ENCODE measurements at regions of chr15 and their contacts with region 1.

Region 1: DNA sequence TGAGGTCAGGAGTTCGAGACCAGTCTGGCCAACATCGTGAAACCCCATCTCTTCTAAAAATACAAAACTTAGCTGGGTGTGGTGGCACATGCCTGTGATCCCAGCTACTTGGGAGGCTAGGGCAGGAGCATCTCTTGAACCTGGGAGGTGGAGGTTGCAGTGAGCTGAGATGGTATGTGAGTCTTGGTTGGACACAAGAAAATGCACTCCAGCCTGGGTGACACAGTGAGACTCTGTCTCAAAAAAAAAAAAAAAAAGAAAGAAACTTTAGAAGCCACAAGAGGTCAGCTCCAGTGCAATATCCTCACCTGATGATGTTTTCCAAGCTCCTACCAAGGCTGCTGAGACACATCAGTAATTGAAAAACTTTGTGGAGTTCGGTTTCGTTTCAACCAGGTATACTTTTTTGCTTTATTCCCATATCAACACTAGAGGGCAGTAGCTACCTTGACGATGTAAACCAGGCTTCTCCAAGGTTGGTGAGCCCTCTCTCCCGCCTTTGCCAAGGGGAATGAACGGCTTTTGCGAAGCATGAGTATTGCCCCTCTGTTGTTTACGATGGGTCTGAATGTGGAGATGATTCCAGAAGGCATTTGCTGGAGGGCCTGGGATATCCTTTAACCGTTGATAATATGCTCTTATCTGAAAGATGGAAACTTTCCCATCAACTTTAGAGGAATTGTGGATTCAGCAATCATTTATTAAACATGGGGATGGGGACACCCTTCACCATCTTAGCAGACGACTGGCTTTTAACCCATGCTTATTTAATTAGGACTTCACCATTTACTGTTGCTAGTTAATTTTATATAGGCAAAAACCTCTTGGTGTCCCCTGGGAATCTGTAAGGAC is 202.8 kb downstream of the SV2B start:
- DNase-seq: no peak
- H3K4me3 ChIP-seq: no peak overlapping the region
- H3K27ac ChIP-seq: no peak overlapping the region
- H3K4me1 ChIP-seq: peaks cover 0 to 19% (median 6%) of the 10 kb centered on the region in 6 donors
- H3K27me3 ChIP-seq: peaks cover 0 to 60% (median 10%) of the 10 kb centered on the region in 7 donors
- CTCF ChIP-seq: peak; percentile 37 to 78 (median 67)
- POLR2A ChIP-seq: no peak

Region 2: DNA sequence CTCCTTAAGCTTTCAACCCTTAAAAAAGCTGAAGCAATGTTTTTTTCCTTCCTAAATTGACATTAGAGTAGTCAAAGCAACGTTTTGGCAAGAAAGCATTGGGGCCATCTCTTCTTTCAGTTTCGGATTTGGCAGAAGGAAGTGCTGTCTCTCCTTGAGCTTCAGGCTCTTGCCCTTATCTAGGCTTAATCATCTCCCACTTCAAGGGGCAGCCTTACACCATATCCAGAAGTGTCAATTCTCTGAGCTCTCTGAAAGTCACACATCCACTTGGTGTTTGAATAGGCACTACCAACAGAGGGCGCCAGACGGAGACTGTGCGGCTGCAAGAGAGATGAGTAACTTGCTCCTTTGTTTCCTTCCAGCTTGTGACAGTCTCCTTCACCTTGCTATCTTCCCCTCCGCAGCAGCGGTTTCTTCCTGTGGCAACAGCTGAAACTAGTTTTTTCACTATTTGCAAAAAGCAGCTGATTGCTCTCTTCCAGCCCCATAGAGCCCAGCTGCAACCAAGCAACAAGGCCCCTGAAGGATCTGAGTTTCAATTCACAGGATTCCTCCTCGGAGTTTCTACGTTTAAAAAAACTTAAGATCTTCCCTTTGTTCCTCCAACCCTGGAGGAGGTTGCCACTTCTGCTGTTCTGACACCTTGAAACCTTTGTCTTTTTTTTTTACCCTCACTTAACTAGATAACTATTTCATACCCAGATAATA is 403.7 kb after region 1 on chr15:
- intact Hi-C with region 1: loop called (anchors 10 kb)
- DNase-seq: peak; percentile 85
- H3K4me3 ChIP-seq: no peak overlapping the region
- H3K27ac ChIP-seq: peak overlapping the region in 6 of 8 donors; percentile 8 to 47 (median 37)
- H3K4me1 ChIP-seq: peaks cover 3 to 19% (median 14%) of the 10 kb centered on the region in 6 donors
- H3K27me3 ChIP-seq: no peaks in the 10 kb centered on the region
- CTCF ChIP-seq: peak; percentile 30 to 85 (median 69)
- POLR2A ChIP-seq: no peak

Region 3: DNA sequence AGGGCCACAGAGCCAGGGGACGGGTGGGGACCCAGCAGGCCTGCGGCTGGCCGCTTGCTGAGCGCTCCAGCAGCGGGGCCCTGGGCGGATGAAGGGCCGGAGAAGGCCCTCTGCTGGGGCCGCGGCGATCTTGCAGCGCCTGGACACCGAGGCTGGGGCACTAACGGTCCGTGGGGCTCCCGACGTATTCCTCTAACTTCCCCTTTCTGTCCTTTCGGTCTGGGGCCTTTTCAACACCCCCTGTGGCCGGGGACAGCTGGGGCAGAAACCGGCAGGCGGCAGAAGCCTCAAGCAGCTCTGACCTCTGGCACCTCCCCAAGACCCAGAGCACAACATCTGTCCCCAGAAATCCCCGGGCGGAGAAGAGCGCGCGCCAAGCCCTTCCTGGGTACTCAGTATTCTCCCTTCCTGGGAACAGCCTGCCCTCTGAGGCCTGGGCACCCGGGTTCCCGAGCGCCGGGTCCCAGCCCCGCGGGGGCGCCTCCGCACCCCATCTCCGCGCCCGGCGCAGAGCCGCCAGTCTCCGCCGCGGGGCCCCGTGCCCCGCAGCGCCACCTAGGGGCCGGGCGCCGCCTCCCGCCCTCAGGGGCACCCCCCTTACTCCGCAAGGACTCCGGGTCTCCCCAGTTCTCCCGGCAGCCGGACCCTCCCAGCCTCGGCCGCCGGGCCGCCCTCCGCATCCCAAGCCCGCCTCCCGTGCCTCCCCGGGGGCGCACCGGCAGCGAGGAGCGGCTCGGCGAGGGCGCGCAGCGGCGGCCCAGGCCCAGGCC is 550.1 kb after region 1 on chr15:
- intact Hi-C with region 1: loop called (anchors 5 kb)
- DNase-seq: peak; percentile 94
- H3K4me3 ChIP-seq: peak overlapping the region; percentile 46 to 89 (median 67)
- H3K27ac ChIP-seq: peak overlapping the region; percentile 53 to 99 (median 92)
- H3K4me1 ChIP-seq: peaks cover 18 to 79% (median 52%) of the 10 kb centered on the region in 6 donors
- H3K27me3 ChIP-seq: peaks cover 0 to 76% (median 3%) of the 10 kb centered on the region in 7 donors
- CTCF ChIP-seq: peak; percentile 48 to 90 (median 81)
- POLR2A ChIP-seq: no peak

Measured in spleen (tissue), 13 donors.